ENCODE measurements at regions of chr11 and their contacts with region 1.

Region 1: DNA sequence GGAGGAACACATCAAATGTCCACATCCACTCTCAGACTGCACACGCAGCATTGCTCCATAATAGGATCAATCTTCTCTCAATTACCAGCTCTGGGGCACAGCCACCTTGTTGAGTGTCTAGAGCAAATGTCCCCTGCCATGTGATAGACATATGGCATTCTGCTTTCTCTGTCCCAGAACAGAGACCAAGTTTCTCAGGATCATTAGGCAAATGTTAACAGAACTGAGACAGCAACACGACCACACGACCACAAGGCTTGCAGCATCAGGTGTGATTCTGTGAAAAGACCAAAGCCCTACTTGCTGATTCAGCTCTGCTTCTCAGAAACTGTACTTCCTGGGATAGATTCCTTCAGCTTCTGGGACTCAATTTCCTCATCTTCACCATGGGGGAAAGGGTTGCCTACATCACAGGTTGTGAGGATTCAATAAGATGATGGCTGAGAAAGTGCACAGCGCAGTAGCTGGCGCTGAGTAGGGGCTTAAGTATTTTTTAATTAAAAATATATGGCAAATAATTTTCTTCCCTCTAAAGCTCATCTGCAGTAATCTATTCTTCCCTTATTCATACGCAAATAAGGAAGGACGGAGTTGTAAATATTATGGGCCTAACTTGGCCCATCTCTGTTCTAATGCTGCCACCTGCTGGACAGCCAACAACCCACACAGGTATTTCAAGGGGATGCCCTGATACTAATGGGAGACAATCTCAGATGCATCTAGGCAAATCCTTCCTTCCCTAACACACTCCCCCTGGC is 54.3 kb upstream of the USP47 start:
- DNase-seq: peak; percentile 72 to 85 (median 79)
- H3K4me3 ChIP-seq: no peak overlapping the region
- H3K27ac ChIP-seq: no peak overlapping the region
- H3K4me1 ChIP-seq: no peaks in the 10 kb centered on the region
- H3K27me3 ChIP-seq: no peaks in the 10 kb centered on the region

Region 2: DNA sequence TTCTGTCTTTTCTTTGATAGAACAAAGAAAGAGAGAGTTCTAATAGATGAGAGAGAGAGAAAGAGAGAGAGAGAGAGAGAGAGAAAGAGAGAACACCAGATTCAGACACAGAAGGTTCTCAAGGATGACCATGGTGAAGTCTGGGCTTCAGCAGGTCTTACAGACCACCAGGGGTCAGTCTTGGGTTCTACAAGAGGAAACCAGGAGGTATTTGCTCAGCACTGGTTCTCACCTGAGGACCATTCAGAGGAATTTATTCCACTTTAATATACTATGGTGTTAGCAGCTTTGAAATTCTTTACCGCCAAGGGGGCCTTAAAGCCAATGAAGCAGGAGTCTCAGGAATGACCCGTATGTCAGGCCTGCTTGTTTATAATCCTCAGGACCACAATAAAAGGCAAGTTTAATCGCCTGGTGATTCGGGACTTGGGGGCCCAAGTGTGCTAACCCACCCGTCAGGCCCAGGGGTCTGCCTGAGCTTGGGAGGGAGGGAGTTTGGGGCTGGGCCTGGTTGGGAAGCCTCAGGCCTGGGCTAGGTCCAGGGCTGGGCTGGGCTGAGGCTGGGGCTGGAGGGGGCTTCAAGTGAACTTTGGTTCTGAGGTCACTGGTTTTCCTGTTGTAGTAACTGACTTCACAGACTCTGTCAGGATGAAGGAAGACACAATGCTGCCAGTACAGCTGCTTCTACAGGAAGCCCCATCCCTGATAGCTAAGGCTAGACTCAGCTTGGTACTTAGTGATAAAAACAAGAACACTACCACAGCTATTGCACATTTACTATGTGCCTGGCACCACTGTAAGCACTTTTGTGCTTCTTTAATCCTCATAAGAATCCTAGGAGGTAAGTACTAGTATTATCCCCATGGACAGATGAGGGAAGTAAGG is 750.4 kb before region 1 on chr11:
- CTCF ChIA-PET with region 1: interaction called, 64 read pairs
- POLR2A ChIA-PET with region 1: no interaction called
- DNase-seq: peak; percentile 72 to 80 (median 78)
- H3K4me3 ChIP-seq: no peak overlapping the region
- H3K27ac ChIP-seq: no peak overlapping the region
- H3K4me1 ChIP-seq: peaks cover 0 to 7% (median 3%) of the 10 kb centered on the region in 4 experiments
- H3K27me3 ChIP-seq: peaks cover 0 to 3% (median 0%) of the 10 kb centered on the region in 5 experiments

Region 3: GRCh38 chr11:11755871-11756270 is 31.6 kb before region 1 on chr11:
- CTCF ChIA-PET with region 1: no interaction called
- POLR2A ChIA-PET with region 1: no interaction called
- DNase-seq: no peak
- H3K4me3 ChIP-seq: no peak overlapping the region
- H3K27ac ChIP-seq: no peak overlapping the region
- H3K4me1 ChIP-seq: no peaks in the 10 kb centered on the region
- H3K27me3 ChIP-seq: peaks cover 0 to 21% (median 3%) of the 10 kb centered on the region in 5 experiments

Region 4: GRCh38 chr11:11848891-11849746 is 61.6 kb after region 1 on chr11:
- CTCF ChIA-PET with region 1: interaction called, 12 read pairs
- POLR2A ChIA-PET with region 1: no interaction called
- DNase-seq: peak; percentile 83 to 87 (median 84)
- H3K4me3 ChIP-seq: no peak overlapping the region
- H3K27ac ChIP-seq: no peak overlapping the region
- H3K4me1 ChIP-seq: peaks cover 14 to 31% (median 25%) of the 10 kb centered on the region in 4 experiments
- H3K27me3 ChIP-seq: no peaks in the 10 kb centered on the region